GM10248 (cell line): ENCODE measurements at regions of chrX and their contacts with region 1.

Region 1: DNA sequence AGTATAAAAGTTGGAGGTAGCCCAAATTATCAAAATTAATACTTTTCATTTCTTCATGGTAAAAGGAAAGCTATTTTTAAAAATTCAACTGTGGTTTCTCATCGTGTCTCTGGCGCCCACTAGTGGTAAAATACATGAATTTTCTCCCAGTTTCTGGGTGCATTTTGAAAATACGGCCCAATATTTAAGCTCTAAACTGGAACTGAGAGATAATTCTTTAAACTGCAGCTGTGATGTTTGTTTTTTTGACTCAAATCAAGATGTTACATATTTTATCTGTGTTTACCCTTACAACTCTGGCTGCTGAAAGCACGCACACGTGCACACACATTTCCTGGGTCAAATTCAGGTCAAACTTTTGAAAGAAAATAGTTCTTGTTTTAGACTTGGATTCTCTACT is 123.9 kb upstream of the ACSL4 start:
- DNase-seq: no peak
- CTCF ChIP-seq: peak; percentile 47

Region 2: DNA sequence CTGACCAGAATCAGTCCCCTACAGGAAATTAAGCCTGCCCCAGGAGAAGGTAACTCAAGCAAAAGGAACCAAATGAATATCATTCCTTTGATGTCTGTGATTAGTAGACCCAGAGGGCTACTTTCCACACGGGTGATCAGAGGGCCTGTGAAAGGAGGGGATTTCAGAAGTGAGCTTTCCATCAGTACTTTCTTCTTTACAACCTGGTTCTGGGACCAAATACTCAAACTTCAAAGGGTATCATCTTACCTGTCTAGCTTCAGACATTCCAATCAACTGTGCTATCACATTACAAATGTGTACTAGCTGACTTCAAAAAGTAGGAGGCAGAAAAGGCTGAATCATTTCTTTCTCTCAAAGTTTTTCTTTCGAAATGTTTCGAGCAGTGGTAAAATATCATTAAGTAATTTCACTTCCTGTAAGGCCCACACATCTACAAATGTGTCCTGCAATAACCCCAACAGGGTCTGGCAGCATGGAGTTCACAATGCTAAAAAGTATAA is 147.8 kb before region 1 on chrX:
- CTCF ChIA-PET with region 1: interaction called, 52 read pairs
- POLR2A ChIA-PET with region 1: no interaction called
- DNase-seq: peak; percentile 31
- CTCF ChIP-seq: no peak

Region 3: GRCh38 chrX:109714340-109714958 is 142.5 kb before region 1 on chrX:
- CTCF ChIA-PET with region 1: interaction called, 52 read pairs
- POLR2A ChIA-PET with region 1: no interaction called
- DNase-seq: no peak
- CTCF ChIP-seq: no peak

Region 4: GRCh38 chrX:109782994-109783700 is 73.8 kb before region 1 on chrX:
- CTCF ChIA-PET with region 1: interaction called, 12 read pairs
- POLR2A ChIA-PET with region 1: no interaction called
- DNase-seq: peak; percentile 26
- CTCF ChIP-seq: no peak

Region 5: GRCh38 chrX:109843963-109844751 is 12.8 kb before region 1 on chrX:
- CTCF ChIA-PET with region 1: interaction called, 30 read pairs
- POLR2A ChIA-PET with region 1: no interaction called
- DNase-seq: peak; percentile 28
- CTCF ChIP-seq: no peak

Region 6: GRCh38 chrX:109872021-109872732 is 15.2 kb after region 1 on chrX:
- CTCF ChIA-PET with region 1: interaction called, 34 read pairs
- POLR2A ChIA-PET with region 1: no interaction called
- DNase-seq: no peak
- CTCF ChIP-seq: no peak

Region 7: GRCh38 chrX:109880629-109881028 is 23.7 kb after region 1 on chrX:
- CTCF ChIA-PET with region 1: interaction called, 34 read pairs
- POLR2A ChIA-PET with region 1: no interaction called
- DNase-seq: peak; percentile 49
- CTCF ChIP-seq: no peak